ENCODE measurements at regions of chr21 and their contacts with region 1.

Region 1: GRCh38 chr21:44051462-44051941 is 39.4 kb downstream of the TRAPPC10 start:
- DNase-seq: peak; percentile 69 to 79 (median 73)
- H3K4me3 ChIP-seq: no peak overlapping the region
- H3K27ac ChIP-seq: peak overlapping the region in 1 of 2 donors; percentile 72
- H3K4me1 ChIP-seq: peaks cover 14% of the 10 kb centered on the region
- H3K27me3 ChIP-seq: no peaks in the 10 kb centered on the region
- CTCF ChIP-seq: no peak
- EP300 ChIP-seq: no peak
- POLR2A ChIP-seq: no peak

Region 2: GRCh38 chr21:44011980-44012527 is 39.4 kb before region 1 on chr21 and contains the start of gene TRAPPC10:
- intact Hi-C with region 1: loop called in 1 of 4 experiments (anchors 5 kb)
- DNase-seq: peak; percentile 81 to 90 (median 83)
- H3K4me3 ChIP-seq: peak within 1 kb of the TSS; percentile 98
- H3K27ac ChIP-seq: peak within 1 kb of the TSS; percentile 76 to 92
- H3K4me1 ChIP-seq: no peaks in the 10 kb centered on the region
- H3K27me3 ChIP-seq: no peaks in the 10 kb centered on the region
- CTCF ChIP-seq: no peak
- EP300 ChIP-seq: no peak
- POLR2A ChIP-seq: peak; percentile 91
- total RNA-seq, gene TRAPPC10: 11.1 to 30.1 (median 23.1) TPM